Left cardiac atrium (tissue), 4 donors: ENCODE measurements at regions of chr16 and their contacts with region 1.

Region 1: DNA sequence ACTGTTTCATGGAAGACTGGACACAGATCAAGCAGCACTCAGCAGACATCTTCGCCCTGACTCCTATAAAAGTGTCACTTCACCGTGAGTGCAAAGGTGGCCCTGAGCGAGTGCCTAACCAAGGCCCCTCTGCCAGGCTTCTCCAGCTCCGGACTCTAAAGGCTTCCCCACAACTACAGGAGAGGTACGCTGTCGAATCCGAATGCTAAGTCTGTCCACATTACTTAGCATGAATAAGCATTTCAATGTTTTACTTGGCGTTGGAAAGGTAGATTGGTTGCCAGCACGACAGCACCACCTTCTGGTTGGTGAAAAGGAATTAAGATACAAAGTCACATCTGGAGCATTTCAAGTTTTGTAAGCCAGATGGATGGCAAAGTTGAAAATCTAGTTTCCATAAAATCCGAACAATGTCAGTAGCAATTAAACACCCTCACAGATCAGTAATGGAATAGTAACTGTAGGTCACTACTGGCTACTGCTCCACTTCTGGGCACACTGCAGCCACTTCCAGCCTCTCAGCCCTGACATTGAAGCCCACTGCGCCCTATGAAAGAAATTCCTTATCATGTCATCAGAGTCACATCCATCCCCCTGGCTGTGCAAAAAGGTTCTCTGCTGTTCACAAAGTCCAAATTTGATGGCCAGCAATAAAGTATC is 100.9 kb downstream of the PARN start:
- DNase-seq: peak; percentile 64
- ATAC-seq: peak; percentile 84 to 89

Region 2: DNA sequence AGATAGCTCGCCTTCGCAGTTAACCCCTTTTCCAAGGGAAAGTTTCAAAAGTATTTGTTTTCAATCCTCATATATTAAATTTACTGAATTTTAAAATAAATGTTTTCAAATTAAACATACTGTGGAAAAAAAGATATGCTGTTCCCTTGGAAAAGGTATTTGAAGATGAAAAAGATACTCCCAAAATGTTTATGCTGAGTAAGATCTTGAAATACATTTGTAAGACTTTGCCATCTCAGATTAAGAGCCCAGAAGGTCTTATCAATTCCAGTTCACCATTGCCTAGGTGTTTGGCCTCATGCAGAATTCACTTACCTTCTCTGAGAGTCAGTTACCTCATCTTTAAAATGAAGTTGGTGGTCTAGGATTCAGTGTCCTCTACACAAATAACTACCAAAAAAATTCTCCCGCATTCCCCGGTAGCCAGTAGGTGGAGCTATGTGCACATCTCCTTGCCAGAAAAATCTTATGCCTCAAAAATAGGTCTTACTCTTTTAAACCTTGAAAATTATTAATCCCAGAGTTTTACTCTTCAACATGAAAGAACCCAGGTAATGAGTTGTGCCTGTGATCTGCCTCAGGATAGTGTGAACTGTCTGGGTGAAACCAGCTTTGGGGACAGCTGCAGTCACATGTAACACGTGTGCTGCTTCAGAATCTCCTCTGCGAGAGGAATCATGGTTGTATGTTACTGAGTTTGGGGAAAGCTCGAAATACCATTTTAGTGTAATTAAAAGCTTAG is 279.7 kb before region 1 on chr16:
- intact Hi-C with region 1: loop called in 1 of 2 experiments (anchors 2 kb)
- DNase-seq: no peak
- ATAC-seq: no peak

Region 3: DNA sequence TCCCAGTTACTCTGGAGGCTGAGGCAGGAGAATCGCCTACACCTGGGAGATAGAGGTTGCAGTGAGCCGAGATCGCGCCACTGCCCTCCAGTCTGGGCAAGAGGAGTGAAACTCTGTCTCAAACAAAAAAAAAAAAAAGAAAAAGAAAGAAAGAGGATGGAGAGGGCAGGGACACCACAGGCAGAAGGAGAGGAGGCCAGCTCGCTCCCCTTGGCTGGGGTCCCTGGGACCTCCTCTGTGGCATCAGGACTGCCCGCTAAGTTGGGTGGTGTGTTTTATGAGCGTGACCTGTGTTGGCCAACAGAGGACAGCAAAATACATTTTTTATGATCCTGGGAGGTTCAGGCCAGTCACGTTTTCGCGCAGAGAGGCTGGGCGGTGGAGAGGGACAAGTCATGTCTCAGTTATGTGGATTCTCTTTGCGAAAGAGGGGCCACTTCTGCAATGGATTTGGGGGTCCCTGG is 228.4 kb before region 1 on chr16:
- intact Hi-C with region 1: loop called (anchors 1 to 2 kb)
- DNase-seq: peak; percentile 74
- ATAC-seq: peak; percentile 69 to 87